ENCODE measurements at regions of chr4 and their contacts with region 1.

Region 1: DNA sequence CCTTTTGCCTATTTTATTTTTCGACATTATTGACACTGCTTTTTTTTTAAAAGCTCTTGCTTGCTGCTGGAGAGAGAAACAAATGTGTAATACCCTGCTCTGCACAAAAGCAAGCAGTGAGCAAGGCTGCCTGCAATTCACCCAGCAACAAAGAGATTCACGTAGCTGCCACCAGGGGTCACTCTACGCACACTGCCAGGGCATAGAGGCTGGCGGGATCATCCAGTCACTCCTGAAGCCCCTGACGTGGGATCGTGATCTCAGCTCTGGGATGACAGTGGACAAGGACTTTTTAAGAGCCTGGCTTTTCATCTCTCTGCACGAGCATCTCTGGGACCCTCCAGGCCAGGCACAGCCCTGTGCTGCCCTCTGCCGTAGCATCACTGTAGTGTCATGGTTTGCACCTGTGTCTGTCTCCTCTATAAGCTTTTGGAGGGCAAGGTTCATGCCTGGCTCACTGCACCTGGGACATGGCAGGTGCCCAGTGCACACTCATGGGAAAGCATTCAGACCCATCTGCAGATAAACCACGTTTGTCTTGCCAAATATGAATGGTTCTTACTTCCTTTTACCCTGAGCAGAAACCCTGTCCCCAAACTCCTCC is 19.8 kb downstream of the C4orf50 start:
- DNase-seq: peak; percentile 76
- ATAC-seq: peak; percentile 86
- H3K4me3 Mint-ChIP-seq: no peak overlapping the region
- H3K27ac Mint-ChIP-seq: no peak overlapping the region
- H3K4me1 Mint-ChIP-seq: no peaks in the 10 kb centered on the region
- H3K27me3 Mint-ChIP-seq: no peaks in the 10 kb centered on the region
- CTCF ChIP-seq: peak; percentile 94

Region 2: DNA sequence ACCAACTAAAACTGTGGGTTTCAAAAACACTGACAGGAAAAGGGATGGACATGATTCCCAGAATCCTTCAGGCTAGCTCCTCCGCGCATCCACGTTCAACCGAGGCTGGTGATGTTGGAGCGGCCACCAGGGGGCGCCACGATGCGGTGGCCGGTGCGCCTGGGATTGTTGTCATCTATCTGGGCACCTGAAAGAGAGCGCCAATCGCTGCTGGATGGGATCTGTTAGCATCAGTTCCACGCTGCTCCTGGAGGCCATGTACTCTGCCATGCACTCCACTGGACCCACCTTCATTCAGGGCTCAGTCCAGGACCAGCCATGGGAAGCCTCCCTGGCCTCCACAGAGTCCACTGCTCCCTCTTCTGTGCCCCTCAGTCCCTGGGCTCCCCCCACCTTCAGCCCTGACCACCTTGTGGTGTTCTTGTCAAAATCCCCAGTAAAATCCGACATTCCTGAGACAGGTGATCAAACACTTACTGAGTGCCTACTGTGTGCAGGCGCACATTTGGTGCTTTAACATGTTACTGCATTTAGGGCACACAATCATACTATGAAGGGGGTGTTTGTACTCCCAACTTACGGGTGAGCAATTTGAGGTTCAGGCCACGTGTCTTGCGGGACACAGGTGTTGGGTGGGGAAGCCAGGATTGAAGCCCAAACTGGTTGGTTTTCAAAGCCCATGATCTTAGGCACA is 176.6 kb before region 1 on chr4:
- CTCF ChIA-PET with region 1: interaction called, 11 read pairs
- POLR2A ChIA-PET with region 1: no interaction called
- DNase-seq: peak; percentile 71
- ATAC-seq: peak; percentile 72
- H3K4me3 Mint-ChIP-seq: no peak overlapping the region
- H3K27ac Mint-ChIP-seq: no peak overlapping the region
- H3K4me1 Mint-ChIP-seq: no peaks in the 10 kb centered on the region; the same call in 1 of the 2 replicates
- H3K27me3 Mint-ChIP-seq: no peaks in the 10 kb centered on the region
- CTCF ChIP-seq: peak; percentile 93

Region 3: GRCh38 chr4:5988086-5988845 is 10.2 kb before region 1 on chr4:
- CTCF ChIA-PET with region 1: interaction called, 15 read pairs
- POLR2A ChIA-PET with region 1: no interaction called
- DNase-seq: no peak
- ATAC-seq: no peak
- H3K4me3 Mint-ChIP-seq: no peak overlapping the region
- H3K27ac Mint-ChIP-seq: no peak overlapping the region
- H3K4me1 Mint-ChIP-seq: no peaks in the 10 kb centered on the region
- H3K27me3 Mint-ChIP-seq: peaks cover 27% of the 10 kb centered on the region
- CTCF ChIP-seq: no peak

Region 4: DNA sequence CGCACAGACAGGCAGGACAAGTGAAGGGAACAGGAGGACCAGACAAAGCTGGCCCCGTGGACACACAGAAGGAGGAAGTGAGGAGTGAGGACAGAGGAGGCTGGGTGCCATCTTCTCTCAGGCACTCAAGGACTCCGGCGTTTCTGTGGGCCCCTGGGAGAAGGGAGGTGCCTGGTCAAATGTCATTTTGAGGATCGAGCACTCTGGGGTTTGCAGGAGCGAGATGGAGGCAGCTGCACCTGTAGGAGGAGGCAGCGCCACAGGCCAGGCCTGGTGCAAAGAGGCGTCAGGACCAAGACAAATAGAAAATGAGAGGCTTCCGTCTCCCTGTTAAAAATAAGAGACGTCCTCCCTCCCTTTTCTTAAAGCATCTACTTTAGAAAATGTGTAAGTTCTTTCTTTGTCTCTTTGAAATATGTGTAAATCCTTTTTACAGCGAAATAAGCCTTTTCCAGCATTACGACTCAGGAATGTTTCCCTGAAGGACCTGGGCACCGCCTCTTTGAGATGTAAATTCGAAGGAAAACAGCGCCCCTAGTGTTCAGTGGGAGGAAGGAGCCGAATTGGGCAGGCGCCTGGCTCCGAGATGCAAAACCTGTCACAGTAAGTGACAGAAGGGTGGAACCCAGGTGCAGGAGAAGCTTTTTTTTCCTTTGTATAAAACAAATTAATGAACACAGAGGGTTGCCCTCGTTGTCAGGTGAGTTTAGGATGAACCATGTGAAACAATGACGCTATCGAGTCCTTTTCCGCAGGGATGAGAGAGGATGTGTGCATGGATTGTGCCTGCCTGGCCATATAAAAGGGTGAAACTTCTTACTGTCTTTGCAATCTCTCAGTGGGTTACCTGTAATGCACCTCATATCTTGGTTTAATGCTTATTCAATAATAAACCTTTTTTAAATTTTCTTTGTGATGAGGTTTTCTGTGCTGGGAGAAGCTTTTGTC is 21.2 kb after region 1 on chr4:
- CTCF ChIA-PET with region 1: interaction called, 28 read pairs
- POLR2A ChIA-PET with region 1: no interaction called
- DNase-seq: peak; percentile 76
- ATAC-seq: peak; percentile 85
- H3K4me3 Mint-ChIP-seq: peak overlapping the region; percentile 1; the same call in 1 of the 2 replicates
- H3K27ac Mint-ChIP-seq: no peak overlapping the region; the same call in 1 of the 2 replicates
- H3K4me1 Mint-ChIP-seq: peaks cover 14% of the 10 kb centered on the region
- H3K27me3 Mint-ChIP-seq: no peaks in the 10 kb centered on the region; the same call in 1 of the 2 replicates
- CTCF ChIP-seq: peak; percentile 86

Region 5: DNA sequence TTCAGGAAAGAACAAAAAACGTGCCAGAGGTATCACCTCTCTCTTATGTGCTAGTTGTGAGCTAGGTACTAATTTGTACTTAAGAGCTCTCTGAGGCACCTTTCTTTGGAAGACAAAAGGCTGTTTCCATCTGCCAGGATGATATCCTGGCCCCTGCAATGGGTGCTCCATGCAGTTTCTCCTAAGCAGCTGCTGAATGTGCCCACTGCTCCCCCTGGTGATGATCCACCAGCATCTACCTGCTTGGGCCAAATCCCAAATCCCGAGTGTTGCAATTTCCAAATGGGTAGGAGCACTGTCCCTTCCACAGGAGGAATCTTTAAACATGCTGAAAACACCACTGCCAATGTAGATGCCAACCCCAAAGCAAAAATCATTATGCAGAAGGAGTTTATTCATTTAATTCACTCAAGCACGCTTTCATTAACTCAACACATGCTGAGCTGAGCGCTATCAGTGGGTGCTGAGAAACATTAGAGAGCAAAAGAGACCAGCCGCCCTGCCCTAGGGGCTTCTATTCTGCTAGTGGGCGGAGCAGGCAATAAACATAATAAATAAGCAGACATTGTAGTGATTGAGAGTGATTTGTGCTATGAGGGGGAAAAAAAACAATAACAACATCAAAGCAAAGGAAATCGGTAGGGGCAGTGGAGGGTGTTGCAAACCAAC is 89.4 kb after region 1 on chr4:
- CTCF ChIA-PET with region 1: interaction called, 84 read pairs
- POLR2A ChIA-PET with region 1: no interaction called
- DNase-seq: peak; percentile 74
- ATAC-seq: peak; percentile 90
- H3K4me3 Mint-ChIP-seq: no peak overlapping the region
- H3K27ac Mint-ChIP-seq: no peak overlapping the region
- H3K4me1 Mint-ChIP-seq: peaks cover 26% of the 10 kb centered on the region
- H3K27me3 Mint-ChIP-seq: peaks cover 67% of the 10 kb centered on the region
- CTCF ChIP-seq: peak; percentile 40; the same call in 1 of the 2 replicates

Region 6: GRCh38 chr4:6278801-6279197 is 280.4 kb after region 1 on chr4:
- CTCF ChIA-PET with region 1: no interaction called
- POLR2A ChIA-PET with region 1: no interaction called
- DNase-seq: no peak
- ATAC-seq: no peak
- H3K4me3 Mint-ChIP-seq: no peak overlapping the region
- H3K27ac Mint-ChIP-seq: no peak overlapping the region
- H3K4me1 Mint-ChIP-seq: peaks cover 11% of the 10 kb centered on the region
- H3K27me3 Mint-ChIP-seq: no peaks in the 10 kb centered on the region
- CTCF ChIP-seq: no peak

Measured in WTC11 (cell line).